ENCODE measurements at regions of chr15 and their contacts with region 1.

Region 1: GRCh38 chr15:70245932-70246331 is 148.2 kb upstream of the TLE3 start:
- DNase-seq: peak; percentile 72 to 74
- H3K4me3 ChIP-seq: no peak overlapping the region
- H3K27ac ChIP-seq: peak overlapping the region; percentile 72
- H3K4me1 ChIP-seq: peaks cover 51% of the 10 kb centered on the region
- H3K27me3 ChIP-seq: no peaks in the 10 kb centered on the region
- CTCF ChIP-seq: no peak

Region 2: GRCh38 chr15:70182857-70183695 is 62.9 kb before region 1 on chr15:
- CTCF ChIA-PET with region 1: no interaction called
- POLR2A ChIA-PET with region 1: interaction called, 10 read pairs
- intact Hi-C with region 1: no loop called
- DNase-seq: no peak
- H3K4me3 ChIP-seq: no peak overlapping the region
- H3K27ac ChIP-seq: no peak overlapping the region
- H3K4me1 ChIP-seq: no peaks in the 10 kb centered on the region
- H3K27me3 ChIP-seq: no peaks in the 10 kb centered on the region
- CTCF ChIP-seq: no peak

Region 3: DNA sequence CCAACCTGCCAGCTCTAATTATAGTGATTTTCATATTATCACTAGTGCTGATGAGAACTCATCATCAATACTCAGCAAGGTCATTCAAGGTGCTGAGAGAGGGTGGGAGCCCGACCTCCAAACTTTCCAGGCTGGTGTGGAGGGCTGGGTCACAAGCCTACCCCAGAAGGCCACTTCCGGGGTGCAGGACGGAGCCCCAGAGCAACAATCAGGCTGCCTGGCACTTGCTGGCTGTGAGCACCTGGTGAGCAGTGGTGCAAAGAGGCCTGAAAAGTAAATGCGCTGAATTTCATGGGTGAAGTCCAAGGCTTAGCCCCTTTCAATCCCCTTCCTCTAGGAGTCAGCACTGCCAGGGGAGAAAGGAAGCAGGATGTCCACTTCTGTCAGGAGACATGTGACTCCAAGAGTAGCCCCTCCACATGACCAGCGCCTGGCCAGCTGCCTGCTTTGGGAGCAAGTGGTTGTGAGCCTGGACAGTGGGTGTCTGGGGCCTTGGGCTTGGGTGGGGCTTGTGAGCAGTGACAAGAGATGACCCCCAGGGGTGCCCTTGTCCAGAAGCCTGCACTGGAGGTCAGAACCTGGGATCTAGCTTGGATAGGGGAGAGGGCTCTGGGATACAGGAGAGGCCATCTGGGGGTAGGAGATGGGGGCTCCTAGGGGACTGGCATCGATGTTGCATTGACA is 16.8 kb after region 1 on chr15:
- CTCF ChIA-PET with region 1: no interaction called
- POLR2A ChIA-PET with region 1: interaction called, 11 read pairs
- intact Hi-C with region 1: no loop called
- DNase-seq: no peak
- H3K4me3 ChIP-seq: no peak overlapping the region
- H3K27ac ChIP-seq: no peak overlapping the region
- H3K4me1 ChIP-seq: peaks cover 30% of the 10 kb centered on the region
- H3K27me3 ChIP-seq: no peaks in the 10 kb centered on the region
- CTCF ChIP-seq: no peak

Region 4: GRCh38 chr15:70289203-70289955 is 43.4 kb after region 1 on chr15:
- CTCF ChIA-PET with region 1: no interaction called
- POLR2A ChIA-PET with region 1: no interaction called
- intact Hi-C with region 1: loop called (anchors 1 kb)
- DNase-seq: peak; percentile 86 to 90
- H3K4me3 ChIP-seq: no peak overlapping the region
- H3K27ac ChIP-seq: peak overlapping the region; percentile 61
- H3K4me1 ChIP-seq: peaks cover 39% of the 10 kb centered on the region
- H3K27me3 ChIP-seq: no peaks in the 10 kb centered on the region
- CTCF ChIP-seq: no peak

Region 5: DNA sequence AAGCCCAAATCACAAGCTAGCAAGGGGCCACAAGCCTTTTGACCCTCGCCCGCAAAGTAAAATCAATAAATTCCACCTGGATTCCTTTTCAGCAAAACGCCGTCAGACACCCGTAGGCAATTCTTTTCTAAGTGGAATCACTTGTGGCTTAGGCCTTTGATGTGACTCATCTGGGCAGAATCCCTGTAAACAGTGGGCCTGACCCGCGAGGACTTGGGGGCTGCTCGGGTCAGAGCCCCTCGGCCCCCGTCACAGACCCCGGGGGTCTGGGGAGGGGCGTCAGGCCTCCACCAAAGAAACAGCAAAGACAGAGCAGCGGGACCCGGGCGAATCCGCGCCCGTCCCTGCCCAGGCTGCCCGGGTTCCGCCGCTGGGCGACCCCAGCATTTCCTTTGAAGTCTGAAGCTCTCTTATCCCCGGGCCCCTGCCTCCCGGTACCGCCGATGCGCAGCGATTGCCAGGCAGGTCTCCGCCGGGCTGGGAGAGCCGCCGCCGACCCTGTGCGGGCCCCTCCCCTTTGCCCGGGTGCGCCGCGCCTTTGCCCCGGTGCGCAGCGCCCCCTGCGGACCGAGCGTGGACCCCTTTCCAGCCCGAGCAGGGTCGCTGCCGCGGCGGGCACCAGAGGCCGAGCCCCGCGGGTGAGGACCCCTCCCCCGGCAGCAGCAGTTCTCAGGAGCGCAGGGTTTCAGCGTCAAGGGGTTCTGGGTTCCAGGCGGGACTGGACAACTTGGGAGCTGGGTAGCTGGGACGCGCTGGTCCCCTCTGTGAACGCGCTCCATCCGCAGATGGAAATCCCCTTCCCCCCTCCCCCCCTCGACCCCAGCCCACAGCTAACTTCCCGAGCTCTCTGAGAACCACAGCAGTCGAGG is 339.1 kb after region 1 on chr15:
- CTCF ChIA-PET with region 1: interaction called, 5 read pairs
- POLR2A ChIA-PET with region 1: no interaction called
- intact Hi-C with region 1: loop called (anchors 10 kb)
- DNase-seq: peak; percentile 71 to 86
- H3K4me3 ChIP-seq: peak overlapping the region; percentile 46; the same call in 1 of the 2 replicates
- H3K27ac ChIP-seq: peak overlapping the region; percentile 81
- H3K4me1 ChIP-seq: peaks cover 18% of the 10 kb centered on the region
- H3K27me3 ChIP-seq: no peaks in the 10 kb centered on the region
- CTCF ChIP-seq: peak; percentile 74